Right ventricle myocardium superior (tissue), 1 donor: ENCODE measurements at regions of chr11 and their contacts with region 1.

Region 1: DNA sequence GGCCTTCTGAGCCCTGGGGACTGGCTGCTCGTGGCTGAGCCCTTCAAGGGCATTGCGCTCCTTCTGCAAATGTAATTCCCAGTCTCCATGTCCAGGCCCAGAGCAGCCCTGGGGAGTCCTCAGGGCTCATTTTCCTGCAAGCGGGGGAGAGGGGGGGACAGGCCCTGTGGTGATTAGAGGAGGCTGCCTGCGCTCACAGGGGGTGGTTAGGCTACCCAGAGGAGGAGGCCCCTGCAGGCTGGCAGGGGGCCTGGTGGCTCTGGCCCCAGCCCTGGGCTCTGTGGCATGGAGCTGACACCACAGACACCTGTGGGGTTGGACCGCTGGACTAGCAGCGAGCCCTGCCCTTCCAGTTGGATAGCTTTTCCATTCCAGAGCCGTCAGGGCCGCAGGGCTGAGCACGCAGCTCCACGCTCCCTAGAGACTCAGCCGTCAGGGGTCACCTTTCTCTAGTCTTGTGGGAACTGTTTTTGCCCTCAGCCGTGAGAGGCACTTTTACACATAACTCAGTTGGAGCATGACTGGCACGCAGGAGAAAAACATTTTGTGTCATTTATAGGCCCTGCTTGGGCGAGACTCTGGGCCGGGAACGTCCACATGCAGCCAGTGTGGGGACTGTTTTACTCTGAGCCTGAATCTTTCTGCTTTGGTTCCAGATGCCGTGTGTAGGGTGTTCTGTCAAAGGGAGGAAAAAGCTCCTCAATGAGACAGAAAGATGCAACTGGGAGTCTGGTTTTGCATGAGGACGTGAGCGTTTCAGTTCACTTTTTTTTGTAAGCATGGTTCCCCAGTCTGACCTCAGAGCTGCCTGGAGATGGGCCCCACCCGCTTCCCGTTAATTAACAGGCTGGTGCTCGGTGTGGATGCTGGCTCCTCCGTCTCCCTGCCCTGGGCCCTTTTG is 58.1 kb downstream of the LRP5 start:
- DNase-seq: peak; percentile 66
- ATAC-seq: peak; percentile 58

Region 2: DNA sequence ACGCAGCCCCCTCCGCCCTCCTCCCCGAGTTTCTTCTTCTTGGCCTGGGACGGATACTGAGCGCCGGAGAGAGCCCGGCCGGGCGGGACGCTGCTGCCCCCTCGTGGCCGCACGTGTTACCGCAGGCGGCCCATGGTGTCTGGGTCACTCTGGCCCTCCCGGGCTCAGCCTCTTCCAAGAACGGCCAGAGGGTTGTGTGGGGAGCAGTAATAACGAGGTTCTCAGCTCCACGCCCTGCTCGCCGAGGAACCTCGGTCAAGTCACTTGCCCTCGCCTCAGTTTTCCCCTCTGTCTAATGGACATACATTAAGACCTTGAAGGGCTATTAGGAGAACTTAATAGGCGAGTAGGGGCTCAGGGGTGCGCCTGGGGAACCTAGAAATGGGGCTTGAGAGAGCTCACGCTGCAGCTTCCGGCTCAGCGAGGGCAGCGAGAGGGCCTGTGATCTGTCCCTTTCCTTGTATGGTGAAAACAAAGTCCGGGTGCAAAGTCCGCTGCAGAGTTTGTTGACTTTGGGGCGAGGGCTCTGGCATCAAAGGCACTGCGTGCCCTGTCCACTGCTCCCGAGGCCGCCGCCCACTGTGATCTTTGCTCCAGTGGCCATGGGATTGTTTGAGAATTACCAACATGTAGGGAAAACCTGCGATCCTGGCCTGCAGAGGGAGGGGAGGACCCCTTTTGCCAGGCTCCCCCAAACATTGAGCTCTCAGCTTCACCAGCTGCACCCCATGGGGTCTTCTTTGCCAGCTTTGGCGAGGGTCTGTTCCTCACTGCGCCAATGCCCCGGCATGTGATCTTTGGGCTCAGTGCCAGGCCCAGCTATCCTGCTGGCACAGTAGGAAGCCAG is 72.4 kb before region 1 on chr11:
- intact Hi-C with region 1: no loop called
- DNase-seq: peak; percentile 88
- ATAC-seq: peak; percentile 98

Region 3: GRCh38 chr11:68312117-68312779 is 58.2 kb before region 1 on chr11 and contains the start of gene LRP5:
- intact Hi-C with region 1: loop called (anchors 2 kb)
- DNase-seq: no peak
- ATAC-seq: peak; percentile 8
- total RNA-seq, gene LRP5: 49.8 TPM

Region 4: GRCh38 chr11:68325183-68325906 is 45.1 kb before region 1 on chr11:
- intact Hi-C with region 1: no loop called
- DNase-seq: peak; percentile 52
- ATAC-seq: peak; percentile 54

Region 5: DNA sequence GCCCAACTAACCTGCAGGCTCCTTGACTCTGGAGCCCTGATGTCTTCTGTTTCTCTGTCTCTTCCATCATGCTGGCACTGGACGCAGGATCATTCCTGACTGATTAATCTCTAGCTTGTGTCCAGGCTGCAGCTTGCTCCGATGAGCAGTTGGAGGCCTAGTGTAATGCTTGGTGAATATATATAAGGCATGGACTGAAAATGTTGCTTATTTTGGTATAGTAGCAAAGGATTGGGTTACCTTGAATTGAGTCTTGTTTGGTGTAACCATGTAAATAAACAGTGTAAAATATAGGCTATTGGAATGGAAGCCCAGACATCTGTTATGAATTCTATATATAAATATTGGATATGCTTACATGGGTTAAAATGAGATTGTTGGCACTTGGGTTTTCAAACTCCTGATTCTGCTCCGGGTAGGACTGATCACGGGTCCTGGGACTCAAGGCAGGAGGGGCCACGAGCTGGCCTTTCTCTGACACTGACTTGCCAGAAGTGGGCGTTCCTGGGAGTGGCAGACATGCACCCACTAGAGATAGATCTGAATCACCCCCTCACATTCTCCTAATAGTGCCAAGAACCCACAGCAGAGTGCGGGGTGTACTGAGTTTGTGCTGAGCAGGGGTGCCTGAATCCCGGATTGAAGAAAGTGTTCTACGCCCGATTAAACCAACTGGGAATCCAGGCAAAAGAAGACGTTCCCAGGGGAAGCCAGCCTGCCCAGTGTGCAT is 32.2 kb before region 1 on chr11:
- intact Hi-C with region 1: loop called (anchors 5 kb)
- DNase-seq: peak; percentile 54
- ATAC-seq: peak; percentile 60